Activated CD4-positive, alpha-beta T cell treated with anti-CD3 and anti-CD28 coated beads, Interleukin-2, amount 10 ng/mL, durations not matched to agents 24 days and 14 days (primary cell): ENCODE measurements at regions of chr17 and their contacts with region 1.

Region 1: GRCh38 chr17:7351665-7352501 is at the start of gene KCTD11:
- DNase-seq: peak; percentile 94
- H3K4me3 Mint-ChIP-seq: peak within 1 kb of the TSS; percentile 88
- H3K27ac Mint-ChIP-seq: peak within 1 kb of the TSS; percentile 92
- H3K4me1 Mint-ChIP-seq: peaks cover 33% of the 10 kb centered on the region
- H3K27me3 Mint-ChIP-seq: no peaks in the 10 kb centered on the region
- total RNA-seq, gene KCTD11: 7.0 and 7.6 TPM in 2 replicates

Region 2: DNA sequence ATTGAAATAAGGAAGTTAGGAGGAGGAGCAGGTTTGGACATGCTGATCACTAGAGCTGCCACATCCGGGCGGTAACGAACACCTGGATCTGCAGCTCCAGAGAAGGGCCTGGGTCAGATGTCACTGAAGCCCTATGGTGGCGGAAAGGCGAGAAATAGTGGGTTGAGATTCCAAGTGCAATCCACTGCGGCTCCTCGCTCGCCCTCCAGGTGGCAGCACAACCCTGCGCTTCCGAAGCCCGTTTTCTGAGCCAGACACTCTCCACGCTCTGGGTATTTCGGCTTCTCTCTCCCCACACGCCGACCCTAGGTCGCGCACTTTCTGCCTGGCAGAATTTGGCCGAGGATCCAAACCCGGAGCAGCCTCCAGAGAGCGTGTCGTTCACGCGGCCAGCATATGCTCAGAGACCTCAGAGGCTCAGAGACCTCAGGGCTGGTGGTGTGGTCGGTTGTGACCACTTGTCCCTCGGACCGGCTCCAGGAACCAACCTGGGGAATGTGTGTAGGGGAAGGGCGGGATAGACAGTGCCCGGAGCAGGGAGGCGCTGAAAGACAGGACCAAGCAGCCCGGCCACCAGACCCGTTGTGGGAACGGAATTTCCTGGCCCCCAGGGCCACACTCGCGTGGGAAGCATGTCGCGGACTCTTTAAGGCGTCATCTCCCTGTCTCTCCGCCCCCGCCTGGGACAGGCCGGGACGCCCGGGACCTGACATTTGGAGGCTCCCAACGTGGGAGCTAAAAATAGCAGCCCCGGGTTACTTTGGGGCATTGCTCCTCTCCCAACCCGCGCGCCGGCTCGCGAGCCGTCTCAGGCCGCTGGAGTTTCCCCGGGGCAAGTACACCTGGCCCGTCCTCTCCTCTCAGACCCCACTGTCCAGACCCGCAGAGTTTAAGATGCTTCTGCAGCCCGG is 71.1 kb before region 1 on chr17:
- intact Hi-C with region 1: loop called (anchors 2 kb)
- DNase-seq: peak; percentile 93
- H3K4me3 Mint-ChIP-seq: peak overlapping the region; percentile 84
- H3K27ac Mint-ChIP-seq: peak overlapping the region; percentile 76
- H3K4me1 Mint-ChIP-seq: peaks cover 10% of the 10 kb centered on the region
- H3K27me3 Mint-ChIP-seq: peaks cover 32% of the 10 kb centered on the region

Region 3: GRCh38 chr17:7336240-7337175 is 15.4 kb before region 1 on chr17 and contains the start of gene ACAP1:
- intact Hi-C with region 1: loop called (anchors 2 kb)
- DNase-seq: peak; percentile 95
- H3K4me3 Mint-ChIP-seq: peak within 1 kb of the TSS; percentile 91
- H3K27ac Mint-ChIP-seq: peak within 1 kb of the TSS; percentile 86
- H3K4me1 Mint-ChIP-seq: peaks cover 46% of the 10 kb centered on the region
- H3K27me3 Mint-ChIP-seq: no peaks in the 10 kb centered on the region
- total RNA-seq, gene ACAP1: 262 and 275 TPM in 2 replicates

Region 4: GRCh38 chr17:7394452-7395191 is 42.7 kb after region 1 on chr17 and contains the start of gene PLSCR3:
- intact Hi-C with region 1: loop called (anchors 2 kb)
- DNase-seq: peak; percentile 97
- H3K4me3 Mint-ChIP-seq: peak within 1 kb of the TSS; percentile 96
- H3K27ac Mint-ChIP-seq: peak within 1 kb of the TSS; percentile 95
- H3K4me1 Mint-ChIP-seq: peaks cover 28% of the 10 kb centered on the region
- H3K27me3 Mint-ChIP-seq: no peaks in the 10 kb centered on the region
- total RNA-seq, gene PLSCR3: 75.5 and 79.8 TPM in 2 replicates

Region 5: GRCh38 chr17:7403977-7404736 is 52.3 kb after region 1 on chr17 and contains the start of gene TMEM256:
- intact Hi-C with region 1: loop called (anchors 2 kb)
- DNase-seq: peak; percentile 98
- H3K4me3 Mint-ChIP-seq: peak within 1 kb of the TSS; percentile 96
- H3K27ac Mint-ChIP-seq: peak within 1 kb of the TSS; percentile 96
- H3K4me1 Mint-ChIP-seq: peaks cover 21% of the 10 kb centered on the region
- H3K27me3 Mint-ChIP-seq: peaks cover 23% of the 10 kb centered on the region
- total RNA-seq, gene TMEM256: 47.4 and 59.3 TPM in 2 replicates